RWPE1 (cell line): ENCODE measurements at regions of chr13 and their contacts with region 1.

Region 1: GRCh38 chr13:90872491-90873025 is 474.9 kb upstream of the MIR17HG start:
- DNase-seq: no peak
- H3K27ac ChIP-seq: no peak overlapping the region
- CTCF ChIP-seq: no peak

Region 2: GRCh38 chr13:89862691-89863036 is 1009.9 kb before region 1 on chr13:
- CTCF ChIA-PET with region 1: interaction called, 12 read pairs
- POLR2A ChIA-PET with region 1: no interaction called
- DNase-seq: no peak
- H3K27ac ChIP-seq: no peak overlapping the region
- CTCF ChIP-seq: no peak

Region 3: DNA sequence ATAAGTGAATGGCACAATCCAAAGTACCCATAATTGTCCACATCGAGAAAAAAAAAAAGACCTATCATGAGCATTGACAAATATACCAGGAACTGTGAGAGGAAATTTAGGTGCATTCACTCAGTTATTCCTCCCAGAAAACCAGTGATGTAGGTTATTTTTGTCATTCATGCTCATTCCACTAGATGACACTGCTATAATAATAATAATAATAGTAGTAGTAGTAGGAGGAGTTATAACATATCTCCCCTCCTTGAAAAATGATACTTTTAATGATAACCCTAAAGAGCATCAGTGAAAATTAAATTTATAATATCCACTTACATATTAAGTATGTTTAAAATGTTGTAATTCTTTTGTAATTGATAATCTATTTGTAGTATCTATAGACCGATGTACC is 11.0 kb after region 1 on chr13:
- CTCF ChIA-PET with region 1: no interaction called
- POLR2A ChIA-PET with region 1: no interaction called
- DNase-seq: no peak
- H3K27ac ChIP-seq: no peak overlapping the region
- CTCF ChIP-seq: no peak